ENCODE measurements at regions of chr17 and their contacts with region 1.

Region 1: GRCh38 chr17:7803981-7804380 is 30.0 kb upstream of the KDM6B start:
- DNase-seq: peak in 3 of 6 donors; percentile 33 to 34 (median 34)
- ATAC-seq: peak; percentile 53 to 75 (median 61)
- H3K4me3 ChIP-seq: no peak overlapping the region
- H3K27ac ChIP-seq: no peak overlapping the region
- H3K4me1 ChIP-seq: no peaks in the 10 kb centered on the region
- H3K27me3 ChIP-seq: no peaks in the 10 kb centered on the region
- CTCF ChIP-seq: no peak

Region 2: DNA sequence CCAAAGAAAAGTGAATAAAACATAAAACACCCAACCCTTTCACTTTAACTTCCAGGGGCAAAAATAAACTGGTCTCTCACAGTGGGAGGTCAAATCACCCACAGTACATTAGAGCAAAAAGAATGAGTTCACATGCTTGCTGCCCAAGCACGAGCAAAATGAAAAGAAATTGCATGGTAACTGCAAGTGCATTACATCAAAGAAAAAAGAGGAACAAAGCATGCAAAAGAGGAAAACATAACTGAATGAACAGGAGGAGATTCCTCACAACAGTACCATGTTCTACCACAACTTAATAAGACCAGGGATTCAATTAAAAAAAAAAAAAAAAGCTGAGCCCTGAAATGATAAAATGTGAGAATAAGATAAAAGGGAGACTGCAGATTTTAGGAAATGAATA is 74.2 kb before region 1 on chr17:
- intact Hi-C with region 1: loop called in 1 of 3 experiments (anchors 10 kb)
- DNase-seq: no peak
- ATAC-seq: no peak
- H3K4me3 ChIP-seq: no peak overlapping the region
- H3K27ac ChIP-seq: no peak overlapping the region
- H3K4me1 ChIP-seq: no peaks in the 10 kb centered on the region
- H3K27me3 ChIP-seq: no peaks in the 10 kb centered on the region
- CTCF ChIP-seq: no peak

Region 3: DNA sequence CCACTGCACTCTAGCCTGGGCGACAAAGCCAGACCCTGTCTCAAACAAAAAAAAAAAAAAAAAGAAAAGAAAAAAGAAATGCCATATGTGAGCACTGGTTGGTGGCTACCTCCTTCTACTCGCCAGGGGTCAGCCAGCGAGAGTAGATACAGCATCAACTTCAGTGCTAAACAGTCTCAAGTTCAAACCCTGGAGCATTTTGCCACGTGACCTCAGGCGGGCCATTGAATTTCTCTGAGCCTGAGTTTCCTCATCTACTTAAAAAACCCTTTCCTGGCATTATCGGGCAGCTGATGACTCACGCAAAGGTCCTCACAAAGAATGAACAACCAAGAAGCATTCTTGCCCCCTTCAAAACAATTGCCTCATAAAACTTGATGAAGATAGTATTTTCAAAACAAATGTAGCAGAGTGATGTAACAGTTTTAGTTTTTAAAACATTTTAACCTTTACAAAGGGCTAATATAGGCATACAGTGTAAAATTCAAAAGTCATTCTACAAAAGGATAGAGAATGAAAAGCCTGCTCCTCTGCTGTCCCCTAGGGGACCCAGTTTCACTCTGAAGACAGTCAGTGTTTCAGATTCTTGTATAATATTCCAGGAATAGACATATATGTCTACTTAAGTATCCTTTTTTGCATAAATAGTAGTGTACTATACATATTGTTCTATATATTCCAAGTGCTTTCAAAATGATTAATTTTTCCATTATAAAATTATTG is 58.1 kb before region 1 on chr17:
- intact Hi-C with region 1: no loop called
- DNase-seq: peak in 1 of 6 donors; percentile 15
- ATAC-seq: no peak
- H3K4me3 ChIP-seq: no peak overlapping the region
- H3K27ac ChIP-seq: no peak overlapping the region
- H3K4me1 ChIP-seq: no peaks in the 10 kb centered on the region
- H3K27me3 ChIP-seq: no peaks in the 10 kb centered on the region
- CTCF ChIP-seq: no peak